H1 (cell line): ENCODE measurements at regions of chr11 and their contacts with region 1.

Region 1: GRCh38 chr11:70378509-70379134 is 19.7 kb upstream of the CTTN start:
- DNase-seq: no peak
- H3K4me3 ChIP-seq: no peak overlapping the region
- H3K27ac ChIP-seq: no peak overlapping the region
- H3K4me1 ChIP-seq: peaks cover 0 to 10% (median 3%) of the 10 kb centered on the region in 4 experiments; a peak in 3 of 7 replicates
- H3K27me3 ChIP-seq: no peaks in the 10 kb centered on the region
- CTCF ChIP-seq: peak; percentile 1 to 43 (median 31); a peak in 3 of 4 replicates
- EP300 ChIP-seq: no peak
- POLR2A ChIP-seq: no peak
- RAD21 ChIP-seq: peak in 1 of 2 experiments; percentile 18; a peak in 1 of 4 replicates

Region 2: GRCh38 chr11:70367071-70367470 is 11.6 kb before region 1 on chr11:
- CTCF ChIA-PET with region 1: interaction called, 15 read pairs
- POLR2A ChIA-PET with region 1: interaction called, 5 read pairs
- DNase-seq: peak in 1 of 2 experiments; percentile 41
- H3K4me3 ChIP-seq: no peak overlapping the region
- H3K27ac ChIP-seq: no peak overlapping the region
- H3K4me1 ChIP-seq: no peaks in the 10 kb centered on the region
- H3K27me3 ChIP-seq: no peaks in the 10 kb centered on the region
- CTCF ChIP-seq: no peak
- EP300 ChIP-seq: no peak
- POLR2A ChIP-seq: no peak
- RAD21 ChIP-seq: no peak

Region 3: GRCh38 chr11:70397983-70398833 is 19.6 kb after region 1 on chr11 and contains the start of gene CTTN:
- CTCF ChIA-PET with region 1: interaction called, 10 read pairs
- POLR2A ChIA-PET with region 1: interaction called, 7 read pairs
- DNase-seq: peak; percentile 80 to 90
- H3K4me3 ChIP-seq: peak within 1 kb of the TSS; percentile 65 to 84 (median 80)
- H3K27ac ChIP-seq: peak within 1 kb of the TSS; percentile 78
- H3K4me1 ChIP-seq: peaks cover 5 to 10% (median 9%) of the 10 kb centered on the region in 4 experiments
- H3K27me3 ChIP-seq: no peaks in the 10 kb centered on the region
- CTCF ChIP-seq: no peak
- EP300 ChIP-seq: no peak
- POLR2A ChIP-seq: peak; percentile 70 to 81
- RAD21 ChIP-seq: no peak
- total RNA-seq, gene CTTN: 207 and 216 TPM in 2 replicates